ENCODE measurements at regions of chr10 and their contacts with region 1.

Region 1: DNA sequence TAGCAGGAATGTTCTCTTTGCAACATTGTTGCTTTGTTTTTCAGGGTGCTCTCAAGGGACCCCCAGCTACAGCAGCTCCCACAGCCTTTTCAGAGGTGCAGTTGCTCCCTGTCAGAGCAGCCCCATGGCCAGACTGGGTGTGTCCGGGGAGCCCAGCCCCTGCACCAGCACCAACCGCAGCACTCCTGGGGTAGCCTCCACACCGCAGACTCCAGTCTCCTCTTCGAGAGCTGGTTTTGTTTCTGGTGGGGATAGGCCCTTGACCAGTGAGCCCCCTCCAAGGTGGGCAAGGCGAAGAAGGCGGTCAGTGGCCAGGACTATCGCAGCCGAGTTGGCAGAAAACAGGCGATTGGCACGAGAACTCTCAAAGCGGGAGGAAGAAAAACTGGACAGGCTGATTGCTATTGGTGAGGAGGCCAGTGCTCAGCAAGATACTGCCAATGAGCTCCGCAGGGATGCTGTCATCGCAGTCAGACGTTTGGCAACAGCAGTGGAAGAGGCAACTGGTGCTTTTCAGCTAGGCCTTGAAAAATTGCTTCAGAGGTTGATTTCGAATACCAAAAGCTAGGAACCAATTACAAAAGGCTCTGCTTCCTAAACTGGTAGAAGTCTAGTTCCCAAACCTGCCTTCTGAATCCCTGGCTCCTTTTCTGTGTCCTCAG is 5.4 kb downstream of the HSPA14 start:
- DNase-seq: no peak
- ATAC-seq: no peak

Region 2: GRCh38 chr10:14959276-14960057 is 116.0 kb after region 1 on chr10 and contains the start of gene MEIG1:
- intact Hi-C with region 1: loop called (anchors 10 kb)
- DNase-seq: peak; percentile 97
- ATAC-seq: peak; percentile 99
- total RNA-seq, gene MEIG1: not detected

Measured in sciatic nerve (tissue), 2 donors.